ENCODE measurements at regions of chr5 and their contacts with region 1.

Region 1: DNA sequence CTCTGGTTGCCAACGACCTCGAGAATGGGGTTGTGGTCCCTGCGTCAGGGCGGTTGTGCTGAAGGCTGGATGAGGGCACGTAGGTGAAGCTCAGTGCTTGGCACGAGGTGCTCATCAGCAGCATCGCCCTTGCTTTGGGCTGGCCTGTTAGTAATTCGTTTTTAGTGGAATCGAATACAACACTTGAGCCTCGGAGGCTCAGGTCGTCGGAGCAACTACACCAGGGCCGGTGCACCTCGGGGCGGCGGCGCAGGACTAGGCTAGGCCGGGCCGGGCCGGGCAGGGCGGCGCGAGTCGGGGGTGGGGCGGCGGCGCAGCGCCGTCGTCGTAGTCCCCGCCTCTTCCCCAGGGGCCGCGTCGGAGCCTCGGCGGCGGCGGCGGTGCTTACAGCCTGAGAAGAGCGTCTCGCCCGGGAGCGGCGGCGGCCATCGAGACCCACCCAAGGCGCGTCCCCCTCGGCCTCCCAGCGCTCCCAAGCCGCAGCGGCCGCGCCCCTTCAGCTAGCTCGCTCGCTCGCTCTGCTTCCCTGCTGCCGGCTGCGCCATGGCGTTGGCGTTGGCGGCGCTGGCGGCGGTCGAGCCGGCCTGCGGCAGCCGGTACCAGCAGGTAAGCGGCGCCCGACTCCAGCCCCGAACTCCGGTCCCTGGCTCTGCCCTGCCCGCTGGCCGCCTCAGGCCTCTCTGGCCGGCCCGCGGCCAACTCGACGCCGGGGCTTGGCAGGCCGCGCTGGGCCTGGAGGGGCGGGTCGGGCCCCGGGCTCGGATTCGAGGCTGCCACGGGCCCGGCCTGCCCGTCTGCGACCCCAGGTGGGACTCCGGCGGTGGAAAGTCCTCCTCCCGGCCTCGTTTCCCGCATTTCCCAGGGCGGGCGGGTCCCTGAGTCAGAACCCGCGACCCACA is at the start of gene NDFIP1:
- DNase-seq: peak; percentile 87
- ATAC-seq: peak; percentile 90
- H3K4me3 Mint-ChIP-seq: peak within 1 kb of the TSS; percentile 93
- H3K27ac Mint-ChIP-seq: peak within 1 kb of the TSS; percentile 93
- H3K4me1 Mint-ChIP-seq: peaks cover 68% of the 10 kb centered on the region
- H3K27me3 Mint-ChIP-seq: no peaks in the 10 kb centered on the region
- total RNA-seq, gene NDFIP1: 47.2 TPM

Region 2: DNA sequence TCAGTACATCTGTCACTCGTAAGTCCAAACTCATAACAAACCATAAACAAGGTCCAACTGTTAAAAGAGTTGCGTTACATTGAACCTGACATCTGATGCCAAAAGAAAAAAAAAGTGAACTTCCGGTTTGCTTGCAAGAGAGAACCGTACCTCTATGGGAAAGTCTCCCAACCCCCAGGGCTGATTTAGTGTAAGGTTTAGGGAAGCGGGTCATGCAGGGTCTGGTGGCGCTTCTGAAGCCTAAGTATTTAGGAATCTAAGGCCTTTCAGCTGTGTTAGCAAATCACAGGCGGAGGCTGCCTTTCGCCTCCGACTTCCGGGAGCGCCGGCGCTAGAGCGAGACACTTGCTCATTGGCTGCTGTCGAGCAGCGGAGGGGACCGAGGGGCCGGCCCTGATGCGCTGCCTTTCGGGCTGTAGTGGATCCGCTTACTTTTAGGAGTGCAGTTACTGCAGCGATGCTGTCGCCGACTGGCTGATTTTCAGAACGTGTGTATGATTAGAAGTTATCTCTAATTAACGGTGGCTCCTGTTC is 83.8 kb before region 1 on chr5:
- CTCF ChIA-PET with region 1: interaction called, 4 read pairs
- POLR2A ChIA-PET with region 1: interaction called, 15 read pairs
- DNase-seq: peak; percentile 90
- ATAC-seq: peak; percentile 100
- H3K4me3 Mint-ChIP-seq: peak overlapping the region; percentile 83
- H3K27ac Mint-ChIP-seq: peak overlapping the region; percentile 99
- H3K4me1 Mint-ChIP-seq: peaks cover 17% of the 10 kb centered on the region
- H3K27me3 Mint-ChIP-seq: peaks cover 3% of the 10 kb centered on the region

Region 3: GRCh38 chr5:142095651-142096330 is 12.9 kb before region 1 on chr5:
- CTCF ChIA-PET with region 1: interaction called, 12 read pairs
- POLR2A ChIA-PET with region 1: interaction called, 48 read pairs
- DNase-seq: peak; percentile 91
- ATAC-seq: peak; percentile 90
- H3K4me3 Mint-ChIP-seq: peak overlapping the region; percentile 51
- H3K27ac Mint-ChIP-seq: peak overlapping the region; percentile 96
- H3K4me1 Mint-ChIP-seq: peaks cover 42% of the 10 kb centered on the region
- H3K27me3 Mint-ChIP-seq: no peaks in the 10 kb centered on the region

Region 4: DNA sequence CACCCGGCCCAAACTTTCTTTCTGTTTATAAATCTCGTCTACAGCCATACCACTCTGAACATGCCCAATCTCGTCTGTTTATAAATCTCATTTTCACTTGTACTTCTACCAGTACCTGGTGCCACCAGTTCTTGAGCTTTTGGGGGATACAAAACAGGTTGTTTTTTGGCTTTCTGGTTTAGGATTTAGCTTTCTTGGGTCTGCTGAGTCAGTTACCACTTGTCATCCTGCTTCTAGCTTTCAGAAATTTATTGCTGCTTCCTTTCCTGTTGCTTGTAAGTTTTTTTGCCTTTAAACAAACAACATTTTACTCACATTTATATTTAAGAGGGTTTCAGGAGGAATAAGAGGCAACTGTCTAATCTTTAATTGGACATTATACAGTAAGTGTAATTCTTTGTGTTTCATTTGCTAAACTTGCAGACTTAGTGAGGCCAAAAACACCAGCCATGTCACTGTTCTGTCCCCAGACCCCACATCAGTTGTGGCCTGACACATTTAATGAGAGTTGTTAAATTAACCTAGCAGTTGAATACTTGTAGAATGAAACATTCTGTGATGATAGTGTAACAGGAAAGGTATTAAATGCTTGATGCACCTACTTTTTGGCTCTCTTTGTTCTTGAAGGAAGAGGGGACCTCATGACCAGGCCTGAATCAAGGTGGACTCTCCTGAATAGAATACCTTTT is 11.7 kb after region 1 on chr5:
- CTCF ChIA-PET with region 1: interaction called, 15 read pairs
- POLR2A ChIA-PET with region 1: interaction called, 7 read pairs
- DNase-seq: no peak
- ATAC-seq: peak; percentile 25
- H3K4me3 Mint-ChIP-seq: peak overlapping the region; percentile 23
- H3K27ac Mint-ChIP-seq: peak overlapping the region; percentile 65
- H3K4me1 Mint-ChIP-seq: peaks cover 51% of the 10 kb centered on the region
- H3K27me3 Mint-ChIP-seq: no peaks in the 10 kb centered on the region

Region 5: DNA sequence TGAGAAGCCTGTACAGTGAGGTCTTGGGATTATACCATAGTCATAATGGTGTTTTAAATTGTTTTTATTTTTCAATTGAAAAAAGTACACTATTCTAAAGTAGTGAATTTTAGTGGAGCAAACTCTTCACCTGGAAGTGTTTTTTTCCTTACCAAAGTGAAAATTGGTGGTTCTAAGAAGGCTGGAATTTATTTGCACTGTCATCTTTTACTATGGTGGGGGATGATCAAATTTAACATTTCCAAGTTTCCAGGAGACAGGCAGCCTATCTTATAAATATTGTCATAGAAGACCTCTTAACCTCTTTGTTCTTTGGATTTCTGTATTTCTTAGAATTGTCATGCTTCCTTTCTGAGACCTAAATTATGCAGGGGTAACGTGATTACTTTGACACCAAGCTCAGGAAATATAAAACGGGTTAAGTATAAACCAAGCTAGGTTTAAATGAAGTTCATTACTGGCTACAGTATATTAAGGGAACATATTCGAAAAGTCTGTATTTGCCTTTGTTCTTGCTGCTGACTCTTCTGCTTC is 20.1 kb after region 1 on chr5:
- CTCF ChIA-PET with region 1: interaction called, 10 read pairs
- POLR2A ChIA-PET with region 1: interaction called, 21 read pairs
- DNase-seq: no peak
- ATAC-seq: peak; percentile 77
- H3K4me3 Mint-ChIP-seq: peak overlapping the region; percentile 38
- H3K27ac Mint-ChIP-seq: peak overlapping the region; percentile 4
- H3K4me1 Mint-ChIP-seq: peaks cover 47% of the 10 kb centered on the region
- H3K27me3 Mint-ChIP-seq: no peaks in the 10 kb centered on the region

Region 6: GRCh38 chr5:142290577-142291299 is 182.1 kb after region 1 on chr5:
- CTCF ChIA-PET with region 1: no interaction called
- POLR2A ChIA-PET with region 1: no interaction called
- DNase-seq: no peak
- ATAC-seq: no peak
- H3K4me3 Mint-ChIP-seq: no peak overlapping the region
- H3K27ac Mint-ChIP-seq: no peak overlapping the region
- H3K4me1 Mint-ChIP-seq: peaks cover 9% of the 10 kb centered on the region
- H3K27me3 Mint-ChIP-seq: no peaks in the 10 kb centered on the region

Measured in activated CD8-positive, alpha-beta T cell treated with anti-CD3 and anti-CD28 coated beads, Interleukin-2, amount 10 ng/mL, durations not matched to agents 7 days and 5 days (primary cell).